Uterus (tissue), 4 donors: ENCODE measurements at regions of chr6 and their contacts with region 1.

Region 1: DNA sequence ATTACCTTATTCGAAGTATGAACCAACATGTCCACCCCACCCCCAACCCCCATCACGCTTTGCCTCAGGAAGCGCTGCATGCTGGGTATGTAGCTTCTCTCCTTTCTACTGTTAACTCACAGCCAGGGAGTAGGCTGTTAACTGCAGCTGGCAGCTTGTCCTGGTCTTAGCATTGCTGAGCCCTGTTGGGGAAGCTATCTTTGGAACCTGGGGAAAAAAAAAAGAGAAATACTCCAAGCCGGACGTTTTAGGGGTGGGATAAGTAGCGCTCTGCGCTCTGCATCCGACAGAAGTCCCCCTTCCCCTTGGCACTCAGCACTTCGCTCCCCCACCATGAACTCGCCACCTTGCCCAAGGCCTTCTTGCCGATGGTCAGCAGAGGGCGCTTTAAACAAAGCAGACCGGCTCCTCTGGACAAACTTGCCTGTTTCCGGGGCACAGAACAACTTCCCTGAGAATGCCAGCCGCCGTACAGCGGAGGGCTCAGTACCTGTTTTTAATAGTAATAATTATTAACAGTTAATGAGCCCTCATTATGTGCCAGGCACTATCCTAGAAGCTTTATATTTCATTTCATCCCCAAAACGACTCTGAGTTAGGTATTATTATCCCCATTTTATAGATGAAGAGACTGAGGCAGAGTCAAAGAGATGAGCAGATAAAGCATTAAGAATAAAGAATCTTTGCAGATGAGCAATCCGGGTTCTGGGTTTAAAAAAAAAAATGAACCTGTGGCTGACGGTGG is 35.2 kb upstream of the MDFI start:
- DNase-seq: peak; percentile 75 to 76
- H3K4me3 ChIP-seq: peak overlapping the region in 1 of 2 donors; percentile 6
- H3K27ac ChIP-seq: peak overlapping the region in 1 of 2 donors; percentile 56
- H3K4me1 ChIP-seq: no peaks in the 10 kb centered on the region
- H3K27me3 ChIP-seq: no peaks in the 10 kb centered on the region
- CTCF ChIP-seq: peak; percentile 83 to 91 (median 86)
- POLR2A ChIP-seq: no peak

Region 2: DNA sequence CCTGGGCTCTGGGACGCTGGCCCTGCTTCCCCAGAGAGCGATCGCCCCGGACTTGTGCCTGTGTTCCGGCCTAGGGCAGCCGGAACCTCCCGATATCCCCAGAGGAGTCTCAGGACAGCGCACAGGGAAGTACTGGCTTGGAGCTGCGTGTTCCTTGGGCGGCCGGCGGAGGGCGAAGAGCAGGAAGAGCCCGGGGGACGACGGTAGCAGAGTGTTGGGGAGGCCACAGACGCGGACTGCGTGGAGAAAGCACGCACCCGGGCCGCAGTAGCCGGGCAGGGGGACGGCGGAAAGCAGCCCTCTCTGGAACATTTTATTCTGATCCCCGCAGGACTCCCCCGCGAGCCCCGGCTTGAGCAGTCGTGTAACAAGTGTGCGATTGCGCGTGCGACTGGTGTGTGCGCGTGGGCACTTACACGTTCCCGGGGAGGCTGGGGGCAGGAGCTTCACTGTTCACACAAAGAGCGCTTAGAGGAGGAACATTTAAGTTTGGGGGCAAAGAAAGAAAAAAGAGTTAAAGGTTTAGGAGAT is 231.5 kb before region 1 on chr6:
- intact Hi-C with region 1: loop called (anchors 5 kb)
- DNase-seq: peak in 1 of 2 donors; percentile 40
- H3K4me3 ChIP-seq: peak overlapping the region in 1 of 2 donors; percentile 15
- H3K27ac ChIP-seq: no peak overlapping the region
- H3K4me1 ChIP-seq: peaks cover 0 to 19% of the 10 kb centered on the region in 2 donors
- H3K27me3 ChIP-seq: peaks cover 8 to 24% of the 10 kb centered on the region in 2 donors
- CTCF ChIP-seq: peak in 3 of 4 experiments; percentile 19 to 37 (median 24)
- POLR2A ChIP-seq: no peak

Region 3: DNA sequence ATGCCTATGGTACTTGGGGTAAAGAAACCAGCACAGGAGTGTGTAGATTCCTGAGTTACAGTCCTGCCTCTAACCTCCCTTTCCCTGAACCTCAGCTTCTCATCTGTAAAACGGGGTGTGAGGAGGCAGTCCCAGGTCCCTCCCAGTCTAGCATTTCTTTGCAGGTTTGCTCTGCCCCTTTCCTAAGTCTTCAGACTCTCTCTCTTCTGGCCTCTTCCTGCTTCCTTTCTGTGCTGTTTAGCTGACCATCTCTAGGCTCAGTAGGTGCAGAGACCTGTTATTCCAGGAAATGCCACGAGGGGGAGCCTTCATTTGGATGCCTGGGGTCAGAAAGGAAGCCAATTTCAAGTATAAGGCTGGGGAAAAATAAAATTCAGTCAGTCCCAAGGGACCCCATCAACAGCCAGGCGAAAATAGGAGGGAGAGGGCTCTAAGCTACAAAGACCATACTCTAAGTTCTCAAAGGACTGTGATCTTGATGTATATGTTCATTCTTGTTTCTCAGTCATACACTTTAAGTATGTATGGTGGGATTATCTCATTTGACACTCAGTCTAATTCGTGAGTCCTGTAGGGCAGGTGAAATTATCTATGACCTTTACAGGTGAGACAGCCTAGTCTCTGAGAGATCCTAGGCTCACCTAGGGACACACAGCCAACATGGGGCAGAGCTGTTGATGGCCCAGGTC is 178.5 kb before region 1 on chr6:
- intact Hi-C with region 1: loop called (anchors 5 kb)
- DNase-seq: peak; percentile 84 to 90
- H3K4me3 ChIP-seq: no peak overlapping the region
- H3K27ac ChIP-seq: no peak overlapping the region
- H3K4me1 ChIP-seq: peaks cover 0 to 3% of the 10 kb centered on the region in 2 donors
- H3K27me3 ChIP-seq: no peaks in the 10 kb centered on the region
- CTCF ChIP-seq: peak; percentile 78 to 91 (median 84)
- POLR2A ChIP-seq: no peak

Region 4: GRCh38 chr6:41683510-41684310 is 80.7 kb after region 1 on chr6:
- intact Hi-C with region 1: loop called (anchors 5 kb)
- DNase-seq: peak; percentile 75 to 79
- H3K4me3 ChIP-seq: peak overlapping the region; percentile 29 to 49
- H3K27ac ChIP-seq: peak overlapping the region; percentile 49 to 79
- H3K4me1 ChIP-seq: peaks cover 0 to 12% of the 10 kb centered on the region in 2 donors
- H3K27me3 ChIP-seq: no peaks in the 10 kb centered on the region
- CTCF ChIP-seq: peak; percentile 88 to 97 (median 91)
- POLR2A ChIP-seq: peak in 1 of 2 donors; percentile 25